ENCODE measurements at regions of chr18 and their contacts with region 1.

Region 1: DNA sequence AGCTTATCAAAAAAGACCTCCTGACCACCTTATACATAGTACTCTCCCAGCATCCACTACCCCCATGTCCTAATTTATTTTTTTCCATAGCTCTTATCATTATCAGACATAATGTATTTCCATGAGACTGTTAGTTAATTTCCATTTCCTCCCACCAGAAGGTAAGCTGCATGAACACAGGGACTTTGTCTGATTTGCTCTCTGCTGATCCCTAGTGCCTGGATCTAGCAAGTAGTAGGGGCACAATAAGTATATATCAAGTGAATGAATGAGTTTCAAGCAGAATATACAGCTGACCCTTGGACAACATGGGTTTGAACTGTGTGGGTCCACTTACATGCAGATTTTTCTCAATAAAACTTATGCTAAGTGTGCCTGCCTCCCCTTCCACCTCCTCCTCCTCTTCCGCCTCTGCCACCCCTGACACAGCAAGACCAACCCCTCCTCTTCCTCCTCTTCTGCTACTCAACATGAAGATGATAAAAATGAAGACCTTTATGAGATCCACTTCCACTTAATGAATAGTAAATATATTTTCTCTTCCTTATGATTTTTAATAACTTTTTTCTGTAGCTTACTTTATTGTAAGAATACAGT is 53.8 kb downstream of the CTAGE1 start:
- DNase-seq: no peak
- ATAC-seq: peak; percentile 61

Region 2: GRCh38 chr18:21831413-21831831 is 532.5 kb before region 1 on chr18:
- intact Hi-C with region 1: loop called (anchors 10 kb)
- DNase-seq: no peak
- ATAC-seq: peak; percentile 75

Region 3: DNA sequence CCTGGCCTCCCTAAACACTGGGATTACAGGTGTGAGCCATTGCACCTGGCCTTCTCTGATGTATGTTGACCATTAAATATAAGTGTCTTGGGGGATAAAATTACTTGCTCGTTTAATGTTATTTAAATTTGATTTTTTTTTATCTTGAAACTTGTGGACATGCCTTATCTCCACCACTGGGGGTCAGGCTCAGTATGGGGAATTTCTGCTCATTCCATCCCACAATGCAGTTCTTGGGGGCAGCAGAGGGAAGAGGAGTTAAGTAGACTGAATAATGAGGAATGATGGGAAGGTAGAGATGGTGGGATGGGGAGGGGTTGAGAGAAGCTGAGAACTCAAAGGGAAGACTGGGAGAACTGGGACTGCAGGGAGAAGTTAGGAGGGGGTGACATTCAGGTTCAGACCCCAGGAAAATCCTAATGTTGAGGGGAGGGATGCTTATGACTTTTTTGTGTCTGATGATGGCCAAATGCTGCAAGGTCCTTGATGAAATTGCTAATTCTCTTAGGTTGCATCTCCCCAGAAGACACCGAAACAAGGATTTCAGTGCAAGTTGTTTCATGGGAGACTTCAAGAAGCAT is 449.1 kb before region 1 on chr18:
- intact Hi-C with region 1: loop called (anchors 10 kb)
- DNase-seq: no peak
- ATAC-seq: peak; percentile 67

Region 4: DNA sequence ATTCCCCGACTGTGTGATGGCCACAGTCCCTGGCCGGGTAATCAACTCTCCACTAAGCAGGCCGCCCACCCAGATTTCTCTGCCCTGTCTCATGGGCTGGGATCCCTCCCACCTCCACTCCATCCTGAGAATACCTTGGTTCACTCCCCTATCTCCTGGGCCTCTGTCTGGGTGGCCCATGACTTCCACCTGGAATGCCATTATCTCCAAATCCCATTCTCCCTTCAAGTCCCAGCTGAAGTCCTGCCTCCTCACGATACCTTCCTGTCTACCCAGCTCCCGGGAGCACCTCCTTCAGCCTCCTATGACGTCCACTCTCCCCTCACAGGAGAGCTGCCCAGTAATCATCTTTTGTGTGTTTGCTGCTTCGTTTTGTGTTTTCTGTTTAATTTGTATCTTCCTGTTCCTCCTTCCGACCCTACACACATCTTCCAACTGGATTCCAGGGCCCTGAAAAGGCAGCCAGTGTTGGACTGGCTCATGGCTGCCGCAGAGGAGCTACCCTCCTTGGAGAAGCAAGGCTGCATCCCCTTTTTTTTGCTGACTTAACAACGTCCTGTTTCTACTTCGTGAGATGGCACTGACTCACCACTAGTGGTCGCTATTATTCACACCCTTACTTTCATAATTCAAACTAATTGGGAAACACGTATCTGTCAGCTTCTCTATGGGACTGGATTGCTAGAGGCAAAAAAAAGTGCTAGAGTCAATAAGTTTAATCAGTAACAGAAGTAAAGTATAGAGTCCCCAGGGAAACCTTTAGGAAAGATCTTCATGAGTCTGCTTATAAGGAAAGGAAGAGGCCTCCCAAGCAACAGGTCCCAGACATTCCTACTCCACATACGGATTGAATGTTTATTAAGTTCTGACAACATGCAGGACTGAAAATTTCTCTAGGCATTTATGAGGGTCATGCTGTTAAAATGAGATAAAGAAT is 366.5 kb before region 1 on chr18:
- intact Hi-C with region 1: loop called (anchors 5 kb)
- DNase-seq: no peak
- ATAC-seq: peak; percentile 63

Region 5: GRCh38 chr18:22084547-22084946 is 279.4 kb before region 1 on chr18:
- intact Hi-C with region 1: no loop called
- DNase-seq: no peak
- ATAC-seq: peak; percentile 65

Region 6: DNA sequence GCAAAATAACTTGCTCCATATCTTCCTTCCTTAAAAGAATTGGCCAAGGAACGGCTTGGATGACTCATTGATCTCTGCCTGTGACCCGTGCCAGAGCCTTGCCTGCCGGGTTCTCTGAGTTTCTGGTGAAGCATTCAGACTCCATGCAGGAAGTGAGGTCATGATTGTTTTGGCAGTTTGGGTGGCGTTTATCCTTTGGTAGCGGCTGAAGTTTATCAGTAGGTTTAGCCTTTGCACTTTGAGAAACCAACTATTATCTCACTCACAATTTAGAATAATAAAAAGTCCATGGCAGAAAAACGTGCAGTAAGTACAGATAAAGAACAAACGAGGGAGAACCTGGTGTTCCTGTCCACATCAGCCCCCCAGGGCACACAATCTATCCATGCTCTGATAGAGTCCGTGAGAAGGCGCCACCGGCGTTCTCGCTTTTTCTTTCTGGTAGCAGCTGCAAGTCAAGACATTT is 68.7 kb after region 1 on chr18:
- intact Hi-C with region 1: no loop called
- DNase-seq: peak; percentile 81
- ATAC-seq: peak; percentile 89

Region 7: GRCh38 chr18:22451796-22452195 is 87.8 kb after region 1 on chr18:
- intact Hi-C with region 1: no loop called
- DNase-seq: no peak
- ATAC-seq: peak; percentile 39

Region 8: GRCh38 chr18:22465859-22466457 is 102.0 kb after region 1 on chr18:
- intact Hi-C with region 1: loop called (anchors 5 kb)
- DNase-seq: no peak
- ATAC-seq: peak; percentile 90

Region 9: DNA sequence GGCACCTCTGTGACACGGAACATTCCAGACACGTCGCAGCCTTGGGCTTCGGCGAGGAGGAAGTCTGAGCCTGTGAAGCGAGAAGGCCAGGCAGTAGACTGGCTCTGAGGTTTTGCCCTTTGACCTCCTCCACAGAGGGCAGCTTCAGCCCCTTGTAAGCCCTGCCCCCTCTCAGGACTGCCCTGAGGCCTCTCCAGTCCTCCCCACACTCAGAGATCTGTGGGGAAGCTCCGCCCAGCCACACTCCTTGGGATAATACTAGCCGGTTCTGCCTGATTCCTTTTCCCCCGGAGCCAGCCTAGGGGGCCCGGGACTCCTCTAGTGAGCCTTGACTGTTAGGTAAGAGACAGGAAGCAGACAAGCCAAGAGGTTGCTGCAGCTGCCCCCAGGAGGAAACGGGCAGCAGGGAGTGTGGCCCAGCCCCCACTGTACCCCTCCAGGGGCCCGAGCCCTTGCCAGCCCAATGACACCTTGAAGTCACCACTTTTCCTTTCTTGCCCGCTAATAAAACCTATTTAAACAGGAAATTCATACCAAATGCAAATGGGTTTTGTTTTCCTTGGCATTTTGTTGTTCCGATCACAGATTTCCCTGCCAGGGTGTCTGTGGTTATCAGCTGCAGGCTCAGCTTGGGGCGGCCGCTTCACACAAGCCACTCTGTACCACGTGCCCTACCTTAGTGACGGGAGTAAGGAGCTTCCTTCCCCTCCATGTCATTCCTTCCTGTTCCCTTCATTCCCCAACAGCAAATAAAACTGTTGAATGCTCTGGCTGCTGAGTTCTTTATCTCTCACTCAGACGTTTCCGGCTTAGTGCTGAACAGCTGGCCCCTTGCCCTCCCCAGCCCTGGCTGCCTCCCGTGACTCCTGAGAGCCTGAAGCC is 896.0 kb after region 1 on chr18:
- intact Hi-C with region 1: no loop called
- DNase-seq: peak; percentile 89
- ATAC-seq: peak; percentile 85

Measured in Right ventricle myocardium inferior (tissue), 1 donor.